Gastrocnemius medialis (tissue), 4 donors: ENCODE measurements at regions of chr4 and their contacts with region 1.

Region 1: DNA sequence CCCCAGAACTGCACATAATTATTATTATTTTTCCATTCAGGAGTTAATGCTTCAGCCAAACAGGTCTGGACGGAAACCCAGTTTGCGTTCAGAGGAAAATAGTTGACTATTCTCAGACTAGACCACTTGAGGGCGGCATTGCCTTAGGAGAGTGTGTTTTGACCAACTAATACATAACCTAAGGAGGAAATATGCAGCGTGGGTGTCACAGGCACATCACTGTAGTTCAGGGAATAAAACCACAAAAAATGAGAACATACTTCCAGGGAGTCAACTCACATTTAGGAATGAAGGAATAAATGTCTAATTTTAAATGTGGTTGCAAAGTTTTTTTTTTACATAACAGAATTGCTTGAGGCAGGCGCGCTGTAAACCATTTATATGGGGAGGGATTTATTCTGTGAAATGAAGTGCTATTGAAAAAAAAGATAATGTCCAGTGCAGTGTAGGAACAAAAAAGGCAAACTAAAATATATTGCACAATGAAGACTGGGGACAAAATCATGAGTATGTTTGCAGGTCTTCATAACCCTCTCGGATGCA is 93.3 kb downstream of the SYNPO2 start:
- DNase-seq: peak; percentile 49 to 68
- ATAC-seq: peak; percentile 64 to 68
- H3K4me3 ChIP-seq: peak overlapping the region in 3 of 4 donors; percentile 1 to 37 (median 15)
- H3K27ac ChIP-seq: peak overlapping the region; percentile 87 to 99 (median 91)
- H3K4me1 ChIP-seq: peaks cover 65 to 75% of the 10 kb centered on the region in 2 donors
- H3K27me3 ChIP-seq: no peaks in the 10 kb centered on the region
- CTCF ChIP-seq: peak; percentile 82 to 92 (median 84)
- POLR2A ChIP-seq: no peak

Region 2: DNA sequence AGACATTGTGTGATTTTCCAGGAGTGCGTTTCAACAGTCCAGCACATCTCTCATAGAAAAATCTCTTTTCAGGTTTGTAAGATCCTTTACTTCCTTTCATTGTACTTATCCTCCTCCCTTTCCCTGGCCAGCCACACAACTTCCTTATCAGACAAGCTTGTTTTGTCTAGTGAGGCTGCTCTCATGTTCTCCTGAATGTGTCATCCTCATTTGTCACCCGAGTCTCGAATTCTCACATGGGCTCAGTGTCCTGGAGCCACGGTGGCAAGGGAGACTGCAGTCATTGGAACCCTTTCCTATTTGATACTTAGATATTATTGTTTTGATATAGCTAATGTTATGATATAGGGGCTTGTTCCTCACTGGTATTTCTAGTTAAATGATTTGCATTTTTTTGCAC is 76.3 kb before region 1 on chr4:
- in situ Hi-C with region 1: no loop called
- intact Hi-C with region 1: no loop called
- DNase-seq: peak; percentile 47 to 50
- ATAC-seq: peak; percentile 91 to 92
- H3K4me3 ChIP-seq: peak overlapping the region in 2 of 4 donors; percentile 10 to 34
- H3K27ac ChIP-seq: peak overlapping the region; percentile 62 to 88 (median 78)
- H3K4me1 ChIP-seq: peaks cover 20 to 37% of the 10 kb centered on the region in 2 donors
- H3K27me3 ChIP-seq: no peaks in the 10 kb centered on the region
- CTCF ChIP-seq: no peak
- POLR2A ChIP-seq: peak in 1 of 2 donors; percentile 8

Region 3: GRCh38 chr4:118939169-118939783 is 42.6 kb before region 1 on chr4:
- in situ Hi-C with region 1: no loop called
- intact Hi-C with region 1: no loop called
- DNase-seq: peak in 1 of 2 donors; percentile 37
- ATAC-seq: peak; percentile 50 to 60
- H3K4me3 ChIP-seq: peak overlapping the region in 3 of 4 donors; percentile 6 to 39 (median 32)
- H3K27ac ChIP-seq: peak overlapping the region; percentile 63 to 81 (median 70)
- H3K4me1 ChIP-seq: peaks cover 18 to 28% of the 10 kb centered on the region in 2 donors
- H3K27me3 ChIP-seq: no peaks in the 10 kb centered on the region
- CTCF ChIP-seq: no peak
- POLR2A ChIP-seq: no peak

Region 4: GRCh38 chr4:119138046-119138445 is 156.1 kb after region 1 on chr4:
- in situ Hi-C with region 1: loop called in 1 of 4 experiments (anchors 25 kb)
- intact Hi-C with region 1: no loop called
- DNase-seq: no peak
- ATAC-seq: no peak
- H3K4me3 ChIP-seq: peak overlapping the region in 2 of 4 donors; percentile 32 to 42
- H3K27ac ChIP-seq: peak overlapping the region; percentile 72 to 89 (median 79)
- H3K4me1 ChIP-seq: peaks cover 41 to 43% of the 10 kb centered on the region in 2 donors
- H3K27me3 ChIP-seq: no peaks in the 10 kb centered on the region
- CTCF ChIP-seq: no peak
- POLR2A ChIP-seq: no peak

Region 5: DNA sequence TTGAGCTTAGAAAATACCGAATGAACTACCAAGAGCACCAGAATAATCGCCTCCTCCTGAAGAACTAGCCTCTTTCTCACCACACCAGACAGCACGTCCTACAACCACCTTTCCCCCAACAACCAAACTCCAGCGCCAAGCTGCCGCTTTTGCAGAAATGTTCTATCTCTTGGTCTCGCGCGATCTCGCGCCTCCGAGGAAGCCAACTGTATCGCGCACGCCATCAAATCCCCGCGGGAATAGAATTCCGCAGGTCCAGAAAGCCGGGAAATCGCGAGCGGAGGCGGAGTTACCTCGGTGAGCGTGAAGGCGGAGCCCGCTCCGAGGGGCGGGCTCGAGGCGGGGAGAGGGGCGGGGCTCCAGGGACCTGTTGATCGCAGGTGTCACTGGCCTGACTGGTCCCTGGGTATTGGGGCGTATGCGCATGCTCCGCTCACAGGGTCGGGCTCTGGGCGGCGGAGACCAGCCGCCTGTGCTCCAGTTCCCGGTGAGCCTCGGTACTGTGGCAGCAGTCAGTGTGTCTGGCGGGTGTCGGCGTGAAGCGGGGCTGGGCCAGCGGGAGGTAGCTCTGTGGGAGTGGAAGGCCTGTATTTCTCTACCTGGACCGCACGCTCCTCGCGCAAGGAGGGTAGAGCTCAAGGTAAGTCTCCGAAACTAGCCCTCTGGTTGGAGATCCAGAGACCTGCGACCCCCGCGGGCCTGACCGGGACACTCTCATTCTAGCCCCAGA is 230.5 kb after region 1 on chr4 and contains the start of gene USP53:
- in situ Hi-C with region 1: loop called in 2 of 4 experiments (anchors 5 to 10 kb)
- intact Hi-C with region 1: loop called (anchors 2 kb)
- DNase-seq: peak; percentile 99
- ATAC-seq: peak; percentile 85 to 88
- H3K4me3 ChIP-seq: peak within 1 kb of the TSS; percentile 79 to 96 (median 88)
- H3K27ac ChIP-seq: peak within 1 kb of the TSS; percentile 95 to 99 (median 98)
- H3K4me1 ChIP-seq: peaks cover 28% of the 10 kb centered on the region in 2 donors
- H3K27me3 ChIP-seq: no peaks in the 10 kb centered on the region
- CTCF ChIP-seq: peak in 2 of 5 experiments; percentile 18 to 51
- POLR2A ChIP-seq: peak; percentile 97 to 99
- total RNA-seq, gene USP53: 56.9 to 190 (median 98.5) TPM

Region 6: DNA sequence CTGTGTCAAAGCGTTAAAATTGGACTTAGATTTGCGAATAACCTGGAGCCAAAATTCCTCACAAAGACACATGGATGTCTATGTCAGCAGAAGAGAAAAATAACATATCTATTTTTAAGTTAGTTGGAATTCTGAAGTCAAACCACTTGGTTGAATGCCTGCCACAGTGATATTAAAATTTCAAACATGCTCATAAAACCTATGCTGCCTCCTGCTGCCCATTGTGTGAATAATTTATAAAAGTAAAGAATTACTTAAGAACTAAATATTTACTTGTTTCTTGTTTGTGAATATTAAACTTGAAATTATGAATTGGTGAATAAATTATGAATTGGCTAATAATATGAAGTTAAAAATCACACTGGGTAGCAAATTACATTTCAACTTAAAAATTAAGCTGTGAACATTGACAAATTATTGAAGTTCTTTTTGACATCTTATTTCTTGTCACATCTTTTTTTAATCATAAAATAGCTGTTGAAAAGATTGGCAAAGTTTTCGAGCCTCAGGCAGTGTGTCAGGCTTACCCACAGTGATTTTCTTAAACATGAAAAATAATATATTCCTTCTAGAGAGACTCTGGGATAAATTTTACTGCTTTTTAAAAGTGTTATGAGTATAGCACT is 304.6 kb after region 1 on chr4:
- in situ Hi-C with region 1: loop called in 3 of 4 experiments (anchors 5 to 10 kb)
- intact Hi-C with region 1: loop called (anchors 2 kb)
- DNase-seq: peak in 1 of 2 donors; percentile 28
- ATAC-seq: peak; percentile 73 to 80
- H3K4me3 ChIP-seq: peak overlapping the region in 1 of 4 donors; percentile 6
- H3K27ac ChIP-seq: peak overlapping the region; percentile 64 to 77 (median 69)
- H3K4me1 ChIP-seq: peaks cover 57 to 62% of the 10 kb centered on the region in 2 donors
- H3K27me3 ChIP-seq: no peaks in the 10 kb centered on the region
- CTCF ChIP-seq: peak; percentile 48 to 77 (median 64)
- POLR2A ChIP-seq: no peak

Region 7: DNA sequence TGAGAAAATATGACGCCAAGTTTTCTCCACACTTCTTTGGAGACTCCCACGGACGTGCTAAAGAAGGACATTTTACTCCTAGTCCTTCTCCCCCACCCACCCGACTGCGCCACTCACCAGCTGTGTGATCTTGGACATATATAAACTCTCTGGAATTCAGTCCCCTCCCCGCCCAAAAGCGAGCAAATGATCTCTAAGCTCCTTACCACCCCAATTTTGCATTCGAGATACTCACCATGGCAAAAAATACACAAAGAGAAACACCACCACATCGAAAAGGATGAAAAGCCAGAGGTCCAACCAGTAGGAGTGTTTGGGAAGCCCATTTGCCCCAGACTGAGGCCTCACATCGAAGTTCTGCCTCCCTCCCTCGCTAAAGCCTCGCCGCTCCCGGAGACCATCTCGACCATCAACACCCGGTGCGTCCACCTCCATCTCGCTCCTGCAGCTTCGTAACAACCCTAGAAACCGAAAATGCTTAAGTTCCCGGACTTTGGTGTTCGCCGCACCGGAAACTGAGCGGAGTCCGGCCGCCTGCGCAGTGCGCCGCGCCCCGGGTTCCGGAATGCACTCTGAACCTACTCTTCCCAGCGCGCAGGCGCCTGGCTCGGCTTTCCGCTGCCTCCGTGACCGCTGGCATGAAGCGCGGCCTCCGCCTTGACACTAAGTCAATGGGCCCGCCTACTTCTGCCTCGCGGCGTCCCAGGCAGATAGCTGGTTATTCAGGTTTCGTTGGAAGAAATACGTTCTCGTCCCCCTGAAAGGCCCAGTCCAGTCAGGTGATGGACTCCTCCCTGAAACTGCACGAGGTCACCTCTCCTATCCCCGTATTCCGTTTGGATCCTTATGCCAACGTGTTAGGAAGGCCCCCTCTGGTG is 318.4 kb after region 1 on chr4:
- in situ Hi-C with region 1: no loop called
- intact Hi-C with region 1: loop called (anchors 5 kb)
- DNase-seq: peak; percentile 85 to 93
- ATAC-seq: peak; percentile 74 to 86
- H3K4me3 ChIP-seq: peak overlapping the region; percentile 69 to 87 (median 81)
- H3K27ac ChIP-seq: peak overlapping the region; percentile 78 to 94 (median 88)
- H3K4me1 ChIP-seq: peaks cover 25 to 33% of the 10 kb centered on the region in 2 donors
- H3K27me3 ChIP-seq: no peaks in the 10 kb centered on the region
- CTCF ChIP-seq: peak in 2 of 5 experiments; percentile 13 to 14
- POLR2A ChIP-seq: peak; percentile 74 to 75